ENCODE measurements at regions of chr7 and their contacts with region 1.

Region 1: GRCh38 chr7:78039790-78040776 is 241.5 kb downstream of the PHTF2 start:
- DNase-seq: peak; percentile 21 to 61 (median 49)
- H3K4me3 ChIP-seq: no peak overlapping the region
- H3K27ac ChIP-seq: no peak overlapping the region
- H3K4me1 ChIP-seq: no peaks in the 10 kb centered on the region
- H3K27me3 ChIP-seq: peaks cover 0 to 14% (median 3%) of the 10 kb centered on the region in 5 experiments

Region 2: DNA sequence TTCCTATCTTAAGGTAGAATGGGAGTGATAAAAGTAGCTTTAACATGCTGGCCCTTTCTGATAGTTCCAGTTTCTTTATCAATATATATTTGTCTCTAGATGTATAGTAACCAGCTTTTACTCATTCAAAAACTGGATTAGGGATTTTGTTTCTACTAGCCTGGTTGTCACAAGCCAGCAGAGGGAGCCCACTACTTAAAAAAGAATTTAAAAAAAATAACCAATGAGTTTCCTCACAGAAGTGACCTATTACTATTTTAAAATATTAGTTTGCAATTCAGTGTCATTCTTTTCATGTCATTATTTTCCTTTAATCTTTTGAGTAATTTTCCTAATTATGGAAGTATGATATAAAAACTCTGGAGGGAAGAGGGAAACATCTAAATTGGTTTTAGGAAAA is 99.4 kb before region 1 on chr7:
- CTCF ChIA-PET with region 1: interaction called, 25 read pairs
- POLR2A ChIA-PET with region 1: no interaction called
- DNase-seq: peak; percentile 32 to 59 (median 55)
- H3K4me3 ChIP-seq: no peak overlapping the region
- H3K27ac ChIP-seq: no peak overlapping the region
- H3K4me1 ChIP-seq: peaks cover 0 to 3% (median 0%) of the 10 kb centered on the region in 4 experiments
- H3K27me3 ChIP-seq: no peaks in the 10 kb centered on the region

Region 3: GRCh38 chr7:78020136-78020873 is 19.8 kb before region 1 on chr7:
- CTCF ChIA-PET with region 1: interaction called, 26 read pairs
- POLR2A ChIA-PET with region 1: no interaction called
- DNase-seq: peak; percentile 78 to 79 (median 78)
- H3K4me3 ChIP-seq: peak overlapping the region in 5 of 7 experiments; percentile 40 to 85 (median 71)
- H3K27ac ChIP-seq: peak overlapping the region in 1 of 2 experiments; percentile 59
- H3K4me1 ChIP-seq: peaks cover 3 to 15% (median 9%) of the 10 kb centered on the region in 4 experiments
- H3K27me3 ChIP-seq: peaks cover 0 to 14% (median 3%) of the 10 kb centered on the region in 5 experiments

Measured in common myeloid progenitor, CD34-positive (primary cell).